Thyroid gland (tissue), 4 donors: ENCODE measurements at regions of chr4 and their contacts with region 1.

Region 1: DNA sequence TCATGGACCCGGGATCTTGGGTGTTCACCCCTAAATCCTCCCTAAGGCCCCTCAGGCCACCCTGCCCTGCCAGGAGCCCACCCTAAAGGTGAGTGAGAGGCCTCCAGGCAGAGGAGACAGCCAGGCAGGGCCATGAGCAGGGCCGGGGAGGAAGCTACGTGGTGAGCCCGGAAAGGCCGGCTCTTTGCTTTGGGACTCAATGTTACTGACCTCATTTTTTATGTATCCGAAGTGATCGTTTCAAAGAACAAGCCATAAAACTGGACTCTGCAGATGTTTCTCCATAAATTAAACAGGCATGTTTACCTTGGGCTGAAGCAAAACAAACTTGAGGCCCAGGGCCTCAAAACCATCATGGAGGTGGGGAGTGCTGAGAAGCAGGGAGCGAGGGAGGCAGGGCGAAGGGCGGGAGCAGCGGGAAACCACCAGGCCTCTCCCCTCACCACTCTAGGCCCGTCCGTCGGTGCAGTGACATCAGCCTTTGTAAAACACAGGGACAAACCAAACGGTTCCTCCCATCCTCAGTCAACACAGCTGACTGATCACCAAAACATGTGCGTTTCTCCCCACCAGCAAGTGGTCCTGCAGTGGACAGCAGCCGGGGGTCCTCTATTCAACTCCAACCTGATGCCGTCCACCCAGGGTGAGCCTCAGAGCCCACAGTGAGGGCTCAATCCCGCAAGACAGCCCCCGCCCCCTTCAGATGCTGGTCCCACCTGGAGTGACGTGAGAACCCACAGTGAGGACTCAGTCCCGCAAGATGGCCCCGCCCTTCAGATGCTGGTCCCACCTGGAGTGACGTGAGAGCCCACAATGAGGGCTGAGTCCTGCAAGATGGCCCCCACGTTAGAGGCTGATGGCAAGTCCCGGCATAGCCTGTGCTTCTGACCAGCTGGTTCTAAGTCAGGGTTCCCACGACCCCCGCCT is 102.9 kb upstream of the LRPAP1 start:
- DNase-seq: no peak
- H3K4me3 ChIP-seq: no peak overlapping the region
- H3K27ac ChIP-seq: no peak overlapping the region
- H3K4me1 ChIP-seq: no peaks in the 10 kb centered on the region
- H3K27me3 ChIP-seq: no peaks in the 10 kb centered on the region
- CTCF ChIP-seq: no peak
- POLR2A ChIP-seq: no peak

Region 2: DNA sequence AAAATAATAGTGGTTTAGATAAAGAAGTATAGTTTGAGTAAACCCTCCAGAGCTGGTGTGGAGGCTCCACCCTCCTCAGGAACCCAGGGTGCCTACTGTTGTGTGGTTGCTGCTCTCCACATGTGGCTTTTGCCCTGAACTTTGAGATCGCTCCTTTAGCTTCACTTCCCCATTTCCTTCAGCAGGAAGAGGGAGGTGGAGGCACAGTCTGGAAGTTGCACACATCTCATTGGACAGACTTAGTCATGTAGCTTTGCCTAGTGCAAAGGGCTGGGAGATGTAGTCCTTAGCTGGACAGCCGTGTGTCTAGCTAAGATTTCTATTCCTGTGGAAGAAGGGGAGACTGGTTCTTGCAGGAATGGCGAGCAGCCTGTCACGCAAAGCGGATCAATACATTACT is 304.4 kb before region 1 on chr4:
- intact Hi-C with region 1: no loop called
- DNase-seq: no peak
- H3K4me3 ChIP-seq: no peak overlapping the region
- H3K27ac ChIP-seq: no peak overlapping the region
- H3K4me1 ChIP-seq: peaks cover 13% of the 10 kb centered on the region in 2 donors
- H3K27me3 ChIP-seq: no peaks in the 10 kb centered on the region
- CTCF ChIP-seq: no peak
- POLR2A ChIP-seq: no peak

Region 3: DNA sequence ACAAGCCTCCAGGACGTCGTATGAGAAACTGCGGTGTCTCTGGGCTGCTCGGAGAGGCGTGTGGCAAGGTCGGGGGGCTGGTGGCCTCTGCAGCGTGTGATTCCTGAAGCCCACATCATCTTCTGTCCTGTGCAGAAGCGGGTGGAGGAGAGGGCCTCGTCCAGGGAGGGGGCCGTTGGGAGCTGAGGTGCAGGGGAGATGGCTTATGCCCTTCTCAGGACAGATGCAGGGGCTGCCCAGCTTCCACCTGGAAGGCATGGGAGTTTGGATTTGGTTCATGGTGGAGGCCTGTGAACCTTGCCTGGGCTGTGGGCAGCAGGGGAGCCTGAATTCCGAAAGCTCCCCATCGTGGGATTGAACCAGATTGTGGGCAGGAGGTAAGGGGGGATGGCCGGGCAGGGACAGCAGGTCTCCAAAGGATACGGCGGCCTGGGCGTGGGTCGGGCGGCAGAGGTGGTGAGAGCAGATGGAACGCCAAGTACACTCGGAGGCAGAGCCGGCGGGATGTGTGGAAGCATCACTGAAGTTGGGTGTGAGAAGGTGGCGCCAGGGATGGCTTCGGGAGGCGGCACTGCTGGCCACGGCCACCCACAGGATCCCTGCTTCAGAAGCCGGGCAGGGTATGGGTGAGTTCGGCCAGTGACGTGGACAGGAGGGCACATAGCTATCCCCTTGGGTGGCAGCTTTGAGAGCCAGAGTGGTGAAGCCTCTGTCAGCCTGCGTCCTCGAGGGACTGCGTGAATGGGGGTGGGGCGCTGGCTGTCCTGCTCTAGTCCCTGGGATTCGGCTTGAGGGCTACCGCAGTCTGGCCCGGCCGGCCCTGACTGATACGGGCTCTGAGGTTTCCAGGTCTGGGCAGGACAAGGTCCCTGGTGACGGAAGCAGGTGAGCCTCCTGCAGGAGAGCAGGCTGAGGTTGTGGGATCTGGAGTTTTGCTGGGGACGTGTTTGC is 54.7 kb after region 1 on chr4:
- intact Hi-C with region 1: loop called (anchors 2 kb)
- DNase-seq: no peak
- H3K4me3 ChIP-seq: no peak overlapping the region
- H3K27ac ChIP-seq: no peak overlapping the region
- H3K4me1 ChIP-seq: no peaks in the 10 kb centered on the region
- H3K27me3 ChIP-seq: no peaks in the 10 kb centered on the region
- CTCF ChIP-seq: no peak
- POLR2A ChIP-seq: no peak

Region 4: GRCh38 chr4:3801931-3802550 is 166.9 kb after region 1 on chr4:
- intact Hi-C with region 1: no loop called
- DNase-seq: no peak
- H3K4me3 ChIP-seq: no peak overlapping the region
- H3K27ac ChIP-seq: no peak overlapping the region
- H3K4me1 ChIP-seq: no peaks in the 10 kb centered on the region
- H3K27me3 ChIP-seq: no peaks in the 10 kb centered on the region
- CTCF ChIP-seq: no peak
- POLR2A ChIP-seq: no peak

Region 5: DNA sequence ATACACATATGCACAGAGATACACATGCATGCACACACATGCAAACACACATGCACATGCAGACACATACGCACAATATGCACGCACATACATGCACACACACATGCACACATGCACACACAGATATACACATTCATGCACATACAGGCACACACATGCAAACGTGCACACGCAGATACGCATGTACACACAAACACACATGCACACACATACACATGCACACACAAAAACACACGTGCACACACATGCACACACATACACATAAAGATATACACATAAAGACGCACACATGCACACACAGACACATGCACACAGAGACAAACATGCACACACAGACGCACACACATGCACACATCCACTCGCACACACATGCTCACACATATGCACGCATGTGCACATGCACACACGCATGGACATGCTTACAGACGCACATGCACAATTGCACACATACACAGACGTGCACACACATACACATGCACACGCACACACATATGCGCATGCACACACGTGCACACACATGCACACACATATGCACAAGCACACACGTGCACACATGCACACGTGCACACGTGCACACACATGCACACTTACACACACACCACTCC is 276.2 kb after region 1 on chr4:
- intact Hi-C with region 1: no loop called
- DNase-seq: no peak
- H3K4me3 ChIP-seq: no peak overlapping the region
- H3K27ac ChIP-seq: no peak overlapping the region
- H3K4me1 ChIP-seq: no peaks in the 10 kb centered on the region
- H3K27me3 ChIP-seq: no peaks in the 10 kb centered on the region
- CTCF ChIP-seq: no peak
- POLR2A ChIP-seq: no peak